Activated CD8-positive, alpha-beta T cell treated with anti-CD3 and anti-CD28 coated beads, Interleukin-2, amount 10 ng/mL, durations not matched to agents 7 days and 5 days (primary cell): ENCODE measurements at regions of chr1 and their contacts with region 1.

Region 1: GRCh38 chr1:239951511-239952140 is 140.1 kb upstream of the FMN2 start:
- DNase-seq: peak; percentile 68
- ATAC-seq: no peak
- H3K4me3 Mint-ChIP-seq: no peak overlapping the region
- H3K27ac Mint-ChIP-seq: no peak overlapping the region
- H3K4me1 Mint-ChIP-seq: no peaks in the 10 kb centered on the region
- H3K27me3 Mint-ChIP-seq: no peaks in the 10 kb centered on the region

Region 2: DNA sequence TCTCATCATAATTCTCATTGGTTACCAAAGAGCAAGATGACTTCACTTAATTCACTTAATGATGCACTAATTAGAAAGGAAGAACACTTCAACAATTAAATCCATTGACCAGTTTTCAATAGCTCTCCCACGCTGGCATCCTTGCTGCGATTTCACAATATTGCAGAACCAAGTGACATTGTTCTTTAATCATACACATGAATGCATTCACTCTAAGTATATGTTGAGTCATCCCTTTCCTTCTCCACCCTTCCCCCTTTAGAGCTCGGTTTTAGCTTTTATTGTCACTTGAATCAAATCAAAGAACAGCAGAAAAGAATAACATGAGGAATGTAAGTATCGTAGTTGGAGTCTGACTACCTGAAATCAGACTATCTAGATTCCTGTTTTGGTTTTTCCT is 93.6 kb before region 1 on chr1:
- CTCF ChIA-PET with region 1: no interaction called
- POLR2A ChIA-PET with region 1: no interaction called
- DNase-seq: no peak
- ATAC-seq: no peak
- H3K4me3 Mint-ChIP-seq: no peak overlapping the region
- H3K27ac Mint-ChIP-seq: no peak overlapping the region
- H3K4me1 Mint-ChIP-seq: no peaks in the 10 kb centered on the region
- H3K27me3 Mint-ChIP-seq: peaks cover 2% of the 10 kb centered on the region

Region 3: GRCh38 chr1:239898062-239898730 is 53.4 kb before region 1 on chr1:
- CTCF ChIA-PET with region 1: no interaction called
- POLR2A ChIA-PET with region 1: no interaction called
- DNase-seq: peak; percentile 84
- ATAC-seq: peak; percentile 98
- H3K4me3 Mint-ChIP-seq: no peak overlapping the region
- H3K27ac Mint-ChIP-seq: no peak overlapping the region
- H3K4me1 Mint-ChIP-seq: peaks cover 3% of the 10 kb centered on the region
- H3K27me3 Mint-ChIP-seq: peaks cover 3% of the 10 kb centered on the region

Region 4: GRCh38 chr1:239976130-239976968 is 24.7 kb after region 1 on chr1:
- CTCF ChIA-PET with region 1: interaction called, 10 read pairs
- POLR2A ChIA-PET with region 1: no interaction called
- DNase-seq: peak; percentile 63
- ATAC-seq: no peak
- H3K4me3 Mint-ChIP-seq: no peak overlapping the region
- H3K27ac Mint-ChIP-seq: no peak overlapping the region
- H3K4me1 Mint-ChIP-seq: no peaks in the 10 kb centered on the region
- H3K27me3 Mint-ChIP-seq: no peaks in the 10 kb centered on the region

Region 5: GRCh38 chr1:240111558-240111957 is 159.9 kb after region 1 on chr1:
- CTCF ChIA-PET with region 1: no interaction called
- POLR2A ChIA-PET with region 1: no interaction called
- DNase-seq: no peak
- ATAC-seq: no peak
- H3K4me3 Mint-ChIP-seq: no peak overlapping the region
- H3K27ac Mint-ChIP-seq: no peak overlapping the region
- H3K4me1 Mint-ChIP-seq: no peaks in the 10 kb centered on the region
- H3K27me3 Mint-ChIP-seq: no peaks in the 10 kb centered on the region

Region 6: DNA sequence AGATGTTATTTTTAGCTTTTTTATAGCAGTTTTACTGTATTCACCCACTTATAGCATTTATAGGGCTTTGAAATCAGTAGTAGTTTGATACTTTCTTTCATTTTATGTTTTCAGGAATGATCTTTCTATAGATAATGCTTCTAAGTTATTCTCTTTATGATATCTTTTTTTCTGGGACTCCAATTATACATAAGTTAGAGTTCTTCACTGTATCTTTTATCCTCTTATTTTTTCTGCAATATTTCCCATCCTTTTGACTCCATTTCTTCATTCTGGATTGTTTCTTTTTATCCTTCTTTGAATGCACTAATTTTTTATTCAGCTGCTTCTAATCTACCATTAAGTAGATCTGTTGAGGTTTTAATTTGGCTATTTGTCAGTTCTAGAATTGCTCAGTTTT is 213.1 kb after region 1 on chr1:
- CTCF ChIA-PET with region 1: no interaction called
- POLR2A ChIA-PET with region 1: no interaction called
- DNase-seq: no peak
- ATAC-seq: no peak
- H3K4me3 Mint-ChIP-seq: no peak overlapping the region
- H3K27ac Mint-ChIP-seq: no peak overlapping the region
- H3K4me1 Mint-ChIP-seq: no peaks in the 10 kb centered on the region
- H3K27me3 Mint-ChIP-seq: no peaks in the 10 kb centered on the region